PC-9 (cell line): ENCODE measurements at regions of chr10 and their contacts with region 1.

Region 1: GRCh38 chr10:52682784-52683183 is 89.8 kb downstream of the MBL2 start:
- DNase-seq: peak; percentile 10 to 88
- H3K4me3 ChIP-seq: peak overlapping the region; percentile 9; the same call in 1 of the 2 replicates
- H3K27ac ChIP-seq: no peak overlapping the region
- H3K4me1 ChIP-seq: peaks cover 20% of the 10 kb centered on the region
- H3K27me3 ChIP-seq: no peaks in the 10 kb centered on the region
- CTCF ChIP-seq: no peak

Region 2: GRCh38 chr10:52437205-52437646 is 245.6 kb before region 1 on chr10:
- CTCF ChIA-PET with region 1: no interaction called
- POLR2A ChIA-PET with region 1: no interaction called
- intact Hi-C with region 1: no loop called
- DNase-seq: no peak
- H3K4me3 ChIP-seq: no peak overlapping the region
- H3K27ac ChIP-seq: no peak overlapping the region
- H3K4me1 ChIP-seq: peaks cover 11% of the 10 kb centered on the region
- H3K27me3 ChIP-seq: no peaks in the 10 kb centered on the region
- CTCF ChIP-seq: no peak

Region 3: GRCh38 chr10:52668024-52668423 is 14.8 kb before region 1 on chr10:
- CTCF ChIA-PET with region 1: no interaction called
- POLR2A ChIA-PET with region 1: interaction called, 23 read pairs
- intact Hi-C with region 1: no loop called
- DNase-seq: no peak
- H3K4me3 ChIP-seq: no peak overlapping the region
- H3K27ac ChIP-seq: no peak overlapping the region
- H3K4me1 ChIP-seq: no peaks in the 10 kb centered on the region
- H3K27me3 ChIP-seq: no peaks in the 10 kb centered on the region
- CTCF ChIP-seq: no peak

Region 4: GRCh38 chr10:52940921-52941320 is 258.1 kb after region 1 on chr10:
- CTCF ChIA-PET with region 1: no interaction called
- POLR2A ChIA-PET with region 1: no interaction called
- intact Hi-C with region 1: no loop called
- DNase-seq: no peak
- H3K4me3 ChIP-seq: no peak overlapping the region
- H3K27ac ChIP-seq: no peak overlapping the region
- H3K4me1 ChIP-seq: no peaks in the 10 kb centered on the region
- H3K27me3 ChIP-seq: no peaks in the 10 kb centered on the region
- CTCF ChIP-seq: no peak